Activated CD8-positive, alpha-beta memory T cell treated with anti-CD3 and anti-CD28 coated beads, Interleukin-2, amount 10 ng/mL, durations not matched to agents 7 days and 5 days (primary cell): ENCODE measurements at regions of chr1 and their contacts with region 1.

Region 1: DNA sequence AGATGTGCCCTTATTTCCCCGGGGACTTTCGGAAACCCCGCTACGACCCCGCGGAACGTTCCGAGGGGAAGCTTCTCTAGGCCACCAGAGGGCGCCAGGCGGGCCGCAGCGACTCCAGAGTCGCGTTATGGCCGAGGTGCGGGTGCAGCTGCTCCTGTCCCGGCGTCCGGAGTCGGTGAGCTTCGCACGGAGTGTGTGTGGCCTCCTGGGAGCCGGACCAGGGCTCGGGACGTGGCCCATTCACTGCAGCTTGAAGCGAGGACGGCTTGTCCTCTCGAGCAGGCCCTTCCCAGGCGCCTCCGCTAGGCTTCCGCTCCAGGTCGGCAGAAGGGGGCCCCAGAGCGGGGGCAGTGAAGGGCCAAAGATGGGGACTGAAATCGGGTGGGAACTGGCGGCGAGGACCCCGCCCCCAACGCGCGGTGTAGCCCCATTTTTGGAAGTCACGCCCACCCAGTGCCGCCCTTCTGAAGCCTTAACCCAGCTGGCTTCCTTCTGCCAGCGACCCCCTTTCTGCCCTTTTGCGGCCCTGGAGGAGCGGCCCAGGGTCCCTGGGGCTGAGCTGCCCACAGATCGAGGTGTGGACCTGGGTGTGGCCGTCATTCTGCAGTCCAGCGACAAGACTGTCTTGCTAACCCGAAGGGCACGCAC is at the start of gene NUDT17:
- DNase-seq: peak; percentile 84
- ATAC-seq: peak; percentile 87
- H3K4me3 Mint-ChIP-seq: no peak within 1 kb of the TSS
- H3K27ac Mint-ChIP-seq: no peak within 1 kb of the TSS
- H3K4me1 Mint-ChIP-seq: peaks cover 9% of the 10 kb centered on the region
- H3K27me3 Mint-ChIP-seq: no peaks in the 10 kb centered on the region
- total RNA-seq, gene NUDT17: 2.8 to 4.1 TPM

Region 2: GRCh38 chr1:145823565-145824498 is 21.8 kb before region 1 on chr1 and contains the starts of genes POLR3C and RNF115:
- CTCF ChIA-PET with region 1: interaction called, 83 read pairs
- DNase-seq: peak; percentile 94
- ATAC-seq: peak; percentile 93
- H3K4me3 Mint-ChIP-seq: peak within 1 kb of the TSS; percentile 97
- H3K27ac Mint-ChIP-seq: peak within 1 kb of the TSS; percentile 91
- H3K4me1 Mint-ChIP-seq: peaks cover 37% of the 10 kb centered on the region
- H3K27me3 Mint-ChIP-seq: peaks cover 2% of the 10 kb centered on the region
- total RNA-seq, gene POLR3C: 31.1 to 37.0 TPM
- total RNA-seq, gene RNF115: 14.6 to 18.0 TPM

Region 3: GRCh38 chr1:145871994-145872924 is 26.6 kb after region 1 on chr1:
- CTCF ChIA-PET with region 1: interaction called, 83 read pairs
- DNase-seq: peak; percentile 70
- ATAC-seq: peak; percentile 88
- H3K4me3 Mint-ChIP-seq: peak overlapping the region; percentile 73
- H3K27ac Mint-ChIP-seq: peak overlapping the region; percentile 41
- H3K4me1 Mint-ChIP-seq: peaks cover 17% of the 10 kb centered on the region
- H3K27me3 Mint-ChIP-seq: peaks cover 41% of the 10 kb centered on the region

Region 4: GRCh38 chr1:145885738-145886287 is 40.2 kb after region 1 on chr1 and contains the start of gene ANKRD35:
- CTCF ChIA-PET with region 1: interaction called, 31 read pairs
- DNase-seq: peak; percentile 94
- ATAC-seq: peak; percentile 100
- H3K4me3 Mint-ChIP-seq: peak within 1 kb of the TSS; percentile 74
- H3K27ac Mint-ChIP-seq: peak within 1 kb of the TSS; percentile 19
- H3K4me1 Mint-ChIP-seq: peaks cover 16% of the 10 kb centered on the region
- H3K27me3 Mint-ChIP-seq: peaks cover 34% of the 10 kb centered on the region
- total RNA-seq, gene ANKRD35: 1.1 to 1.4 TPM

Region 5: GRCh38 chr1:145918144-145918992 is 72.7 kb after region 1 on chr1 and contains the start of gene PEX11B:
- CTCF ChIA-PET with region 1: interaction called, 184 read pairs
- DNase-seq: peak; percentile 94
- ATAC-seq: peak; percentile 93
- H3K4me3 Mint-ChIP-seq: peak within 1 kb of the TSS; percentile 91
- H3K27ac Mint-ChIP-seq: peak within 1 kb of the TSS; percentile 95
- H3K4me1 Mint-ChIP-seq: peaks cover 42% of the 10 kb centered on the region
- H3K27me3 Mint-ChIP-seq: no peaks in the 10 kb centered on the region
- total RNA-seq, gene PEX11B: 27.3 to 36.2 TPM

Region 6: DNA sequence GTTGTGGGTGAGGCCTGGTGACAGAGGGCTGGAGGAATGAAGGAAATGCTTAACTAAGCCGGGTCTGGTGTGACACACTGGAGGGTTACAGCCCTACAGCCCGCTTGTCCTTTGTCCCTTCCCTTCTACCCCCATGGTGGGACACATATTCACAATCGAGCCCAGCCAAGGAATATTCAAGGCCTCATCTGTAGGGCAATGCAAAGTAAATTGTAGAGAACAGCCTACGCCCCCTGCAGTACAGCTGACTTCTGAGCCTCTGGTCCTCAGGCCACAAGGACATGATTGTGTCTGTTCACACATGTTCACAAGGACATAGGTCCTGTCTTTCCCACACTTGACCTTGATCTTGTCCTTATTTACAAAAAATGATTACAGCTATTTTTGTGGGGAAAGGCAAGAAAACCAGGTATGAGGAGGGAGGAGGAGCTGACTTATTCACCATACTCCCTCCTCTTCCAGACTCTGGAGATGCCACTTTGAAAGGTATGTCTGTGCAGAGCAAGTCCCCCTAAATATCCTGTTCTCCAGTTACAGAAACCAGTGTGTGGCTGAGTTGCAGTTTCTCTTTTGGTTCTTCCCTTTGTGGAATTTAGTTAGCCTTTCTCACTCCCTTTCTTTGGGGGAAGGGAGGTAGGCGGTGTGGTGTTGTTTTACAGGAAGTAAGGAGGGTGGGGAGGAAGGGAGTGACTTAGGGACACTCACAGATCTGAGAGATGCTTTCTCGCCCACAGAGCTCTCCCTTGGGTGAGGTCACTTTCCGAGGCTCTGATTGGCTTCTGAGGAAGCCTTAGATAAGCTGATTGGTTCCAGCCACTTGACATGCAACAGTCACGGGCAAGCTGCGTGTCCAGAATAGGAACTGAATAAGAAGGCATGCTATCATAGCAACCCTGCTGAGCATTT is 133.5 kb after region 1 on chr1:
- CTCF ChIA-PET with region 1: interaction called, 48 read pairs
- DNase-seq: peak; percentile 96
- ATAC-seq: peak; percentile 93
- H3K4me3 Mint-ChIP-seq: no peak overlapping the region
- H3K27ac Mint-ChIP-seq: no peak overlapping the region
- H3K4me1 Mint-ChIP-seq: peaks cover 25% of the 10 kb centered on the region
- H3K27me3 Mint-ChIP-seq: no peaks in the 10 kb centered on the region

Region 7: GRCh38 chr1:146036965-146037646 is 191.5 kb after region 1 on chr1:
- CTCF ChIA-PET with region 1: interaction called, 18 read pairs
- DNase-seq: peak; percentile 91
- ATAC-seq: peak; percentile 49
- H3K4me3 Mint-ChIP-seq: peak overlapping the region; percentile 88
- H3K27ac Mint-ChIP-seq: peak overlapping the region; percentile 97
- H3K4me1 Mint-ChIP-seq: peaks cover 33% of the 10 kb centered on the region
- H3K27me3 Mint-ChIP-seq: peaks cover 11% of the 10 kb centered on the region